A673 (cell line): ENCODE measurements at regions of chr19 and their contacts with region 1.

Region 1: GRCh38 chr19:1652471-1653299 is at the start of gene TCF3:
- DNase-seq: peak; percentile 99
- H3K4me3 ChIP-seq: peak within 1 kb of the TSS; percentile 83
- H3K27ac ChIP-seq: peak within 1 kb of the TSS; percentile 100
- H3K4me1 ChIP-seq: peaks cover 15% of the 10 kb centered on the region
- H3K27me3 ChIP-seq: no peaks in the 10 kb centered on the region
- CTCF ChIP-seq: no peak
- total RNA-seq, gene TCF3: 333 and 361 TPM in 2 replicates

Region 2: DNA sequence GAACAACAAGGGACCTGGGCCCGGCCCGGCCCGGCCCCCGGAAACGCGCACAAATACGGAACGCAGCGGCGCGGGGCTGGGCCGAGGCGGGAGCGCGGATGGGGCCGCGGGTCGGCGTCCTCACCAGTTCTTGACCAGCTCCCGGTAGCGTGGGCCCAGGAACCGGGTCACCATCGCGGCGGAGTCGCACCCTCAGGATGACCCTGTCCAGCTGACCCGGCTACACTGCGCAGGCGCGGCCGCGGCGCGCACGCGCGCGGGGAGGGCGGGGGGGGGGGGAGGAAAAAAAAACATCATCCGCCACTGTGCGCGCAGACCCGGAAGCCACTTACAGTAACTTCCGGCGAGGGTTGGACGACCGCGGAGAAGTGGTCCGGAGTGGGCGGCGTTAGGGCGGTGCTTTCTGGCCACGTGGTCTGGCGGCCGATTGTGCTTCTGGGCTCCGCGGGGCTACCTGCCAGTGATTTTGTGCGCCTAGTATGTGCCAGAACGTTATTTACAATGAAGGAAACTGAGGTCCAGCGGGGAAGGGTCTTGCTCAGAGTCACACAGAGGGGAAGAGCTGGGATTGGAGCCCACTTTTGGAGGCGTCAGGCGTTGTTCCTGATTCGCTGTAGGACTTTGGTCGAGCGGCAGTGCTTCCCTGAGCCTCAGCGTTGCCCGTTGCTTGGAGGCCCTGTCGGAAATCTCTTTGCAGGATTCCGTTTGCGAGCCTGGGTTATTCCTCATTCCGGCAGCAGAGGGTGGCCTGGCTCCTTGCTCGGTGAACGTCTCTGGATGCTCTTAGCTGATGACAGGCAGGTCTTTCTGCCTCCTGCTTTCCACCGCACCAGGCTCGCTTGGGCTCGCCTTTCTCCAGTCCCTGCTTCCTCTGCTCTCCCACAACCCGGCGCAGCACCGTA is 47.2 kb before region 1 on chr19 and contains the start of gene UQCR11:
- CTCF ChIA-PET with region 1: no interaction called
- POLR2A ChIA-PET with region 1: no interaction called
- intact Hi-C with region 1: loop called (anchors 5 kb)
- DNase-seq: peak; percentile 97
- H3K4me3 ChIP-seq: peak within 1 kb of the TSS; percentile 83
- H3K27ac ChIP-seq: peak within 1 kb of the TSS; percentile 87
- H3K4me1 ChIP-seq: peaks cover 6% of the 10 kb centered on the region
- H3K27me3 ChIP-seq: no peaks in the 10 kb centered on the region
- CTCF ChIP-seq: peak; percentile 70
- total RNA-seq, gene UQCR11: 256 and 258 TPM in 2 replicates